ENCODE measurements at regions of chr20 and their contacts with region 1.

Region 1: DNA sequence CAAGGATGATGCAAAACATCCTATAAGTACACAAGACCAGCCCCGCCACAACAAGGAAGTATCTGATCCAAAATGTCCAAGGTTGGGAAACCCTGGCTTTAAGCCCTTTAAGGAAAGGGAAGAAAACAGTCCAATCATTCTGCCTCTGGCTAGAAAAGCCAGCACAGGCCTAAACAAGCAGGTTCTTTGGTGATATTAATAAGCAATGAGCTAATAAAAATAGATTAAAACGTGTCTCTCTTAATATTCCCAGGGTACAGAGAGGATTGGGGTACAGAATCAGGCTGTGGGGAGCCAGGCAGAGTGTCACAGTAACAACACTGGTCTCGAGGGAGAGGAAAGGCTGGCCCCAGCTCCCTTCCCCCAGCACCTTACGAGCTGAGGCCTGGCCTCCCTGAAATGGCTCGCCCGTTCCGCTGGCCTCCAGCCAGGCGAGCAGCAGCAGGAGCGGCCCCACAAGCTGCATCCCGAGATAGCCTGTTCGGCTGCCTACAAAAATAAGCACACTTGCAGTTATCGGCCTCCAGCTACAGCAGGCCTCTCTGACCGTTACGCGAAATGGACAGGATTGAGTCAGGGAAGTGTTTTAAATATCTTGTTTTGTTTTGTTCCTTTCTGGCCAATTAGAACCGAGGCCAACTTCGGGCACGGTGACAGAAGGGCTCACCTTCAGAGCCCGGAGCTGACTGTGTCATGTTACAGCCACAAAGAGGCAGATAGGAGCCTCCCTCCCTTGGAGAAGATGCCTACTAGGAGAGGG is 4.0 kb upstream of the ZMYND8 start:
- DNase-seq: peak; percentile 87 to 96
- H3K4me3 ChIP-seq: no peak overlapping the region
- CTCF ChIP-seq: no peak
- POLR2A ChIP-seq: no peak

Region 2: GRCh38 chr20:47317127-47317895 is 43.2 kb before region 1 on chr20:
- intact Hi-C with region 1: loop called (anchors 5 kb)
- DNase-seq: peak; percentile 91 to 96
- H3K4me3 ChIP-seq: no peak overlapping the region
- CTCF ChIP-seq: no peak
- POLR2A ChIP-seq: no peak